ENCODE measurements at regions of chr6 and their contacts with region 1.

Region 1: DNA sequence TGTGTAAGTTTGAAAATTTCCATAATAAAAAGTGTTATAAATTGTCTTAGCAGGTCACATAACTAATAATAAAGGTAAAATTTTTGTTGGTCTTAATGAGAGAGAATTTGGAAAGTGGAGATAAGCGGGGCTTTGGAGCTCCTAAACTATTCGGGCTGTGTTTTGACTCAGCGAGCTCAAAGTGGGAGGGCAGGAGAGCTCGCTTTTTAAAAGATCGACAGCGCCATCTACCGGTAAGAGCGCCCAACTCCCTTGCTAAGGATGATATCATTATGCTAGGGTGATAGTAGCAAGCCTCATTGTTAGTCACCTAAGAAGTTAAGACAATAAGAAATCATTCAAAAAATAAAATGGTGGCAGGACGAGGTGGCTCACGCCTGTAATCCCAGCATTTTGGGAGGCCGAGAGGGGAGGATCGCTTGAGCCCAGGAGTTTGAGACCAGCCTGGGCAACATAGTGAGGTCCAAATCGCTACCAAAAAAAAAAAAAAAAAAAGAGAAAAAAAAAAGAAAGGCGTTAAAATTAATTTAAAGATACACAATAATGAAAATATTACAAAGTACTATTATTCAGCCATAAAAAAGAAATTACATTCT is 24.8 kb downstream of the C6orf15 start:
- DNase-seq: peak; percentile 61 to 95 (median 87)

Region 2: DNA sequence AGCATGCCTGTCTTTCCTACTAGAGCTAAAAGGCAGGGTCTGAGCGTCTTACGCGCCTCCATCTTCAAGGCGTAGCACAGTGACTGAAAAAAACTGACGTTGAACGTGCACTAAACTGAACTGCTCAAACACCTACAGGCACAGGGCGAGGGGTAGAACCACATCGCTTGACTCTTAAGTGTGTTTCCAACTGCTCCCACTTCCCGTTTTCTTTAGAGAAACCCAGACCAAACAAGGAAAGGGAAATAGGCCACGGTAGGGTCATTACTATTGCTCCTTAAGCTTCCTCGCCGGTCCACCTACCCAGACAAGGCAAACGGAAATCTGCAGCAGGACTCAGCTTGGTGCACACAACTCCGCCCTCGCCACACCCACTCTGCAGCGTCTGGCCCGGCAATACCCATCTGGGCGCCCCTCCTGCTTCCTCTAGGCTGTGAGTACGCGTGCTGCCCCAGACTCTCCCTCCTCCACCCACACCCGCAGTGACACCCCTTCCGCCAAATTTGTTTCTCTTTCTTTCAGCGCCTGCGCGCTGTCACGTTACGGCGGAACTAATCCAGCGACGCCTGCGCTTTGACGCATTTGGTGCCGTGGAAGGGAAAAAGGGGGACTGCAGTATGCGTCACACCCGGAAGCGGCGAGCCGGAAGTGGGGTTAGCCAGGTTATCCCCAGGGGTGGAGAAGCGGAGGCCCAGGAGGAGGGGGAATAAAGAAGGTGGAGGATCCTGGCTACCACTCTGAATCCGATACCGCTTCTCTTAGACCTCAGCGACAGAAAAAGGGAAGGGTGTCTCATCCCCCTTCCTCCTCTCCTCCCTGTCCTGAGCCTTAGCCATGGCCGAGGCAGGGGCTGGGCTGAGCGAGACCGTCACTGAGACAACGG is 1020.8 kb before region 1 on chr6 and contains the start of gene PPP1R11:
- intact Hi-C with region 1: no loop called
- DNase-seq: peak; percentile 98 to 100 (median 99)

Region 3: DNA sequence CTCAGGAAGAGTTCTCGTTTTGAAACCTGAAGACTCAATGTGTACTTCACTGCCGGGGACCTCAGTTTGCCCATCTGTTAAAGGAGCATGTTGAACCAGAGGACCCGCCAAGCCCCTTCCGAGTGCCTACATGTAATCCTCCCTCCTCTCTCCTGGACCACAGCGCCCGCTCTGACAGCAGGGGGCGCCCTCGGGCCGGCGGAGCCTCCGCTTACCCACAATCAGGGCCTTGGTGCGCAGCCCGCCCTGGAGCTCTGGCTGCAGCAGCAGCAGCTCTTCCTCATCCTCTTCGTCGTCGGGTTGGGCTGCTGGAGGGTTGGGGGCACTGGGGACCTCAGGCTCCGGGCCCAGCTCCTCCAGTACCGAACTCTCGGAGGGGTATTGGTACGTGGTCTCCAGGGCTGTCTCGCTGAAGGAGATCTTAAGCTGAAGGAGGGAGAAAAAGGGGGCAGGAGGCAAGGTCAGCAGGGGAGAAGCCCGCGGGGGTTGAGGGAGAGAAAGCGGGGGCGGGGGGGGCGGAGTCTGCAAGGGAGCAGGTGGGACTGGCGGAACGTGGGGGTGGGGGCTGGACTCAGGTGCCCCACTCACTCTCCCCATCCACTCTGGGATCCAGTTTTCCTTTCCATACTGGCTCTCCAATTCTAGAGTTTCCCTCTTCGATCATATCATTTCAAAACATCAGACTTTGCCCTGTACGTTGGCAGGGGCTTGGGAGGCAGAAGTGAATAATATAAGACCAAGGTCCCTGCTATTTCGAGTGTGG is 408.4 kb before region 1 on chr6:
- intact Hi-C with region 1: loop called (anchors 2 kb)
- DNase-seq: peak; percentile 75 to 98 (median 90)

Region 4: GRCh38 chr6:30742316-30743098 is 345.1 kb before region 1 on chr6 and contains the start of gene FLOT1:
- intact Hi-C with region 1: loop called (anchors 10 kb)
- DNase-seq: peak; percentile 81 to 98 (median 90)

Region 5: DNA sequence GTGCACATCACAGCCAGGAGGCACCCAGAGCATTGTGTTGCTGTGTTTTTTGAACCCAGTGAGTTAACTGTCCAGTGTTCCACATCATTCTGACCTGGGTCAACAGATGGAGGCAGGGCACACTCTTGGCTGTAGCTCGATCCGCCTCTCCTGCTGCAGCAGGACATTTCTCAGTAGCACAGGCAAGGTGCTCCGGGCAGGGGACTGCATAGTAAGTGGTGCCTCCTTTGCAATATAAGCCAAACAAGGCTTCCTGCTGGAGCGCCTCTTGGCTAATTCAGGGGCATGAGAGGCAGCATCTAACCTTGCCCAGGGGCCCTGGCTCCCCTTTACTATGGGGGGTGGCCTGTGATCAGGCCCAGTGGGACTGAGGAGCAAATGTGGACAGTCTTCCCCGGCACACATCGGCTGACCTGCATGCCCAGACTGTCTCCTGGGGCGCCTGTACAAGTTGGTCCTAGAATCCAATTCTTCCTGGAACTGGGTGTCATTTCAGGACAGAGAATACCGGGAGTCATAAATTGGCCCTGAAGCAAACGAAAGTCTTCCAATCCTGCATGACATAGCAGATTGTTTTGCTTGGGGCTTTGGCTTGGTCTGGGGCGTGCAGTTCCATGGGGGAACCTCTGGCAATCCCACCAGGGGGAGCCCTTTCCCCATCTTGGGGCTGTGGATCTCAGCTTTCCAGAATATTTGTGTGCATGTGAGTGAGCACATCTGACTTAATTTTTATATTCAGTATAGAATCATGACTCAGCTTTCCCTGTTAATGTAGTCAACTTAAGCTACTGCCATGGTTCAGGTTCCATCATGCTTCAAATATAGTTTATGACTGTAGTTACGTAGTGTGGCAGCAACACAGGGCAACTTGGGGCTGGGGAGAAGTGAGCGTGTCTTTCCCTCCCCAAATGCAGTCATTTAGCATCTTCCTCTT is 259.3 kb before region 1 on chr6:
- intact Hi-C with region 1: loop called (anchors 5 kb)
- DNase-seq: peak; percentile 75 to 97 (median 89)

Region 6: GRCh38 chr6:30914076-30914853 is 173.3 kb before region 1 on chr6 and contains the start of gene VARS2:
- intact Hi-C with region 1: loop called (anchors 5 kb)
- DNase-seq: peak; percentile 88 to 99 (median 92)

Region 7: DNA sequence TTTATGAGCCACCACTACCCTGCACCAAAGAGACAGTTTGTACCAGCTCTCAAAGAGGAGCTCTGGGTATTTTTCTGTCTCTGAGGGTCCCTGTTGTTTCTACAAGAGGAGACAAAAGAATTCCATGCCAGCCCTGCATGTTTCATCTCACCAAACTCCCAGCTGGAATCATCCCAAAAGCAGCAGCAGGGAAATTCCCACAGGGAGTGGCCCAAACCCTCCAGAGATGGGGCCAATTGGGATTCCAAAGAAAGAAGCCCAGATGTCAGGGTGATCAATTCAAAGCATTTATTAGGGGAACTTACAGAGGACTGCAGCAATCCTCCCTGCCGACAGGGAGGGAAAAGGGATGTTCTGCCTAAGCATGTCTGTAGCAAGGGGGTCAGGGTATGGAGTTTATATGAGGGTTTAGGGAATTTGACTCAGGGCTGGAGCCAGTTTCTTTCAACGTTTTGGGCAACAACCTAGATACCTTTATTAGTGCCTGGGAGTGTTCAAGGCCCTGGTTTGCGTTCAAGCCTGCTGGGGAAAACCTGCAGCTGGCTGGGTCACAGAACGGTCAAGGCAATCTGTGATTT is 30.1 kb before region 1 on chr6:
- intact Hi-C with region 1: loop called (anchors 2 kb)
- DNase-seq: no peak